ENCODE measurements at regions of chr17 and their contacts with region 1.

Region 1: GRCh38 chr17:38598536-38598935 is 7.2 kb downstream of the SRCIN1 start:
- DNase-seq: no peak
- H3K4me3 ChIP-seq: no peak overlapping the region
- CTCF ChIP-seq: no peak

Region 2: GRCh38 chr17:38584350-38584925 is 14.1 kb before region 1 on chr17:
- CTCF ChIA-PET with region 1: interaction called, 62 read pairs
- POLR2A ChIA-PET with region 1: no interaction called
- DNase-seq: no peak
- H3K4me3 ChIP-seq: no peak overlapping the region
- CTCF ChIP-seq: peak; percentile 89

Region 3: DNA sequence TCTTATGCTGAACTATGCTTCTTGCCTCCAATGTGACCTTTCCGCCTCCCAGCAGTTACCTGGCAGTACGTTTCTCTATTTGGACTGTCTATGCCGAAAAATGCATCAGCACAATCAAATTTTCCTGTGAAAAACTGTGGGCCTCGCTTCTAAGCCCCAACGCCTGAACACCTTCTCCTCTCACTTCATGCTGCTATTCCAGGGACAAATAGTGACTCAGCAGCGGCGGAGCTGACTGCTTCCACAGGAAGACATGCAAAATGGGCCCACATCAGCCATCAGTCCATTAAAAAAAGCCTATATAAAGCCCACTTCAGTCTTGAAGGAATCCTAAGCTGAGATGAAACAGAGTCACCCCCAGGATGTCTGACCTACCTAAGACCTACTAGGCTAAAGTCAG is 211.3 kb after region 1 on chr17:
- CTCF ChIA-PET with region 1: no interaction called
- POLR2A ChIA-PET with region 1: no interaction called
- DNase-seq: no peak
- H3K4me3 ChIP-seq: no peak overlapping the region
- CTCF ChIP-seq: no peak

Measured in AG04449 (cell line).